Activated naive CD4-positive, alpha-beta T cell treated with anti-CD3 and anti-CD28 coated beads, Interleukin-2, amount 10 ng/mL, durations not matched to agents 7 days and 5 days (primary cell): ENCODE measurements at regions of chr12 and their contacts with region 1.

Region 1: DNA sequence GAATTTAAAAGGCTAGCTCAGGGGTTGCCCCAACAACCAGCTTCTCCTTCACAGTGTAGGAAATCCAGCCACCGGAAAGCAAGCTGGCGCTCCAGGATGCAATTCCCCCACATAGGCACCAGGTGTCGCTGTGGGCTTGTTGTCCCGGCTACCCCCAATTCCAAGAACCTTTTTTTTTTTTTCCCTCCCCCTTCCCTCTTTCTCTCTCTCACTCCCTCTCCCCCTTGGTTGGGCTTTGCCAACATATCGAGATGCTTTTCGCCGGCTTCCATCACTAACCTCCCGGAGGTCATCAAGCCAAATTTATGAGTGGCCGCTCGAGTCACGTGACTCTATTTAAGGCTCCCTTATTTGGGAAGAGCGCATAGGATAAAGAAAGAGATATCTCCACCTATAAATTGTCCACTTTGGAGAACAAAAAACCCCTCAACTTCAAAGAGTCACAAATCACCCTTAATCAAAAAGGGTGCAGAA is at the start of gene HOXC5:
- DNase-seq: peak; percentile 77
- H3K4me3 Mint-ChIP-seq: peak within 1 kb of the TSS; percentile 39
- H3K27ac Mint-ChIP-seq: peak within 1 kb of the TSS; percentile 74
- H3K4me1 Mint-ChIP-seq: peaks cover 23% of the 10 kb centered on the region
- H3K27me3 Mint-ChIP-seq: peaks cover 100% of the 10 kb centered on the region

Region 2: DNA sequence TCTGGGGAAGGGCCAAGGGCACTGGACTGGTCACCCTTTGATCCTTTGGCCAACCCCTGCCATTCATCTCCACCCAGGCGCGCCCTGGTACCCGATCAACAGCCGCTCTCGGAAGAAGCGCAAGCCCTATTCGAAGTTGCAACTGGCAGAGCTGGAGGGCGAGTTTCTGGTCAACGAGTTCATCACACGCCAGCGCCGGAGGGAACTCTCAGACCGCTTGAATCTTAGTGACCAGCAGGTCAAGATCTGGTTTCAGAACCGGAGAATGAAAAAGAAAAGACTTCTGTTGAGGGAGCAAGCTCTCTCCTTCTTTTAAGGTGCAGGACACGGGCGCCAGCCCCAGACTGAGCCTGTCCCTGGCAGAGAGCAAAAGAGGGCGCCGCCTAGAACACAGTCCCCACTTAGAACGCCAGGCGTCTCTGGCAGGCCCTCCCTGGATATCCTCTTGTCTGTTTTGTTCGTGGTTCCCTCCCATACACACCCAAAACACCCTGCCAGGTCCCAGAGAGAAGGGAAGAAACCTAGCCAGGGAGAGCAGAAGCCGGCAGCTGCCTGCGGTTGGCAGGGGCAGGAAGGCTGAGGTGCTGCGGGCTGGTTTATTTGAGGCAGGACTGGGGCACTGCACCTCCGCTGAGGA is 76.3 kb before region 1 on chr12:
- CTCF ChIA-PET with region 1: no interaction called
- DNase-seq: no peak
- H3K4me3 Mint-ChIP-seq: no peak overlapping the region
- H3K27ac Mint-ChIP-seq: peak overlapping the region; percentile 64
- H3K4me1 Mint-ChIP-seq: peaks cover 7% of the 10 kb centered on the region
- H3K27me3 Mint-ChIP-seq: peaks cover 100% of the 10 kb centered on the region

Region 3: GRCh38 chr12:54005853-54006686 is 26.6 kb before region 1 on chr12:
- CTCF ChIA-PET with region 1: interaction called, 18 read pairs
- DNase-seq: peak; percentile 87
- H3K4me3 Mint-ChIP-seq: peak overlapping the region; percentile 67
- H3K27ac Mint-ChIP-seq: no peak overlapping the region
- H3K4me1 Mint-ChIP-seq: peaks cover 20% of the 10 kb centered on the region
- H3K27me3 Mint-ChIP-seq: peaks cover 100% of the 10 kb centered on the region

Region 4: GRCh38 chr12:54051874-54052437 is 19.3 kb after region 1 on chr12:
- CTCF ChIA-PET with region 1: interaction called, 13 read pairs
- DNase-seq: no peak
- H3K4me3 Mint-ChIP-seq: no peak overlapping the region
- H3K27ac Mint-ChIP-seq: no peak overlapping the region
- H3K4me1 Mint-ChIP-seq: peaks cover 32% of the 10 kb centered on the region
- H3K27me3 Mint-ChIP-seq: peaks cover 100% of the 10 kb centered on the region

Region 5: DNA sequence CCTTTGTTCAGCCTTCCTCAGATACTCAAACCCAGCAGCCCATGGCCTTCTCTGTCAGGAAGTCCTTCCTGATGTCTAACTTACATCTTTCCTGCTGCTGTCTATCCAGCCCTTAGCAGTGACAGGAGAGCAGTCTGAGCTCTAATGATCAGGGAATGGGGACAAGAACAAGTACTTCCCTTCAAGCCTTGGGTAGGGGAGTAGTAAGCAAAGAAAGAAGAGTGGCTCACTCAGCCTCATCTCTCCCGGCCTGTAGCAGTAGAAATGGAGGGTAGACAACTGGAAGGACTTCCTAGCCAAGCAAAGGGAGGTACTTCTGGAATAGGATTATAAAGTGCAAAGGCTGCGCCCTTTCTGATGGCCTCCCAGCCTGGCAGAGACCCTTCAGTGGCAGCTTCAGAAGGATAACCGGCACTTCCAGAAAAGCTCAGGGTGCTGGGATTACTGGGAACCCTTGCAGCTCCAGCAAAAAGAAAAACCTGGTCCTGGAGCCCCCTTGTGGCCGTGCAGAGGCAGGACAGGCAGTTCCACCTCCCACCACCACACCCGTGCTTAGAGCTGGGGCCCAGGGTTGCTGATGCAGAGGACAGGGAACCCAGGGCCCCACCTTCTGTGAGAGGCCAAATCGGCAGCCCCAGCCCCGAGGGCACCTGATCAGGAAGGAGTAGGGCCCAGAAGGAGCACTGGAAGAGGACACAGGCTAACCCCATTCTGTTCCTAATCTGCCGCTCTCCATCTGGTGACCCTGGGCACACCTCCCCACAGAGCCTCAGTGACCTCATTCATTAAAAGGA is 168.5 kb after region 1 on chr12:
- CTCF ChIA-PET with region 1: interaction called, 93 read pairs
- DNase-seq: peak; percentile 77
- H3K4me3 Mint-ChIP-seq: no peak overlapping the region
- H3K27ac Mint-ChIP-seq: no peak overlapping the region
- H3K4me1 Mint-ChIP-seq: no peaks in the 10 kb centered on the region
- H3K27me3 Mint-ChIP-seq: peaks cover 90% of the 10 kb centered on the region

Region 6: GRCh38 chr12:54214553-54215406 is 182.1 kb after region 1 on chr12:
- CTCF ChIA-PET with region 1: interaction called, 42 read pairs
- DNase-seq: peak; percentile 93
- H3K4me3 Mint-ChIP-seq: peak overlapping the region; percentile 74
- H3K27ac Mint-ChIP-seq: peak overlapping the region; percentile 82
- H3K4me1 Mint-ChIP-seq: peaks cover 52% of the 10 kb centered on the region
- H3K27me3 Mint-ChIP-seq: peaks cover 57% of the 10 kb centered on the region